CD8-positive, alpha-beta memory T cell (primary cell): ENCODE measurements at regions of chr17 and their contacts with region 1.

Region 1: DNA sequence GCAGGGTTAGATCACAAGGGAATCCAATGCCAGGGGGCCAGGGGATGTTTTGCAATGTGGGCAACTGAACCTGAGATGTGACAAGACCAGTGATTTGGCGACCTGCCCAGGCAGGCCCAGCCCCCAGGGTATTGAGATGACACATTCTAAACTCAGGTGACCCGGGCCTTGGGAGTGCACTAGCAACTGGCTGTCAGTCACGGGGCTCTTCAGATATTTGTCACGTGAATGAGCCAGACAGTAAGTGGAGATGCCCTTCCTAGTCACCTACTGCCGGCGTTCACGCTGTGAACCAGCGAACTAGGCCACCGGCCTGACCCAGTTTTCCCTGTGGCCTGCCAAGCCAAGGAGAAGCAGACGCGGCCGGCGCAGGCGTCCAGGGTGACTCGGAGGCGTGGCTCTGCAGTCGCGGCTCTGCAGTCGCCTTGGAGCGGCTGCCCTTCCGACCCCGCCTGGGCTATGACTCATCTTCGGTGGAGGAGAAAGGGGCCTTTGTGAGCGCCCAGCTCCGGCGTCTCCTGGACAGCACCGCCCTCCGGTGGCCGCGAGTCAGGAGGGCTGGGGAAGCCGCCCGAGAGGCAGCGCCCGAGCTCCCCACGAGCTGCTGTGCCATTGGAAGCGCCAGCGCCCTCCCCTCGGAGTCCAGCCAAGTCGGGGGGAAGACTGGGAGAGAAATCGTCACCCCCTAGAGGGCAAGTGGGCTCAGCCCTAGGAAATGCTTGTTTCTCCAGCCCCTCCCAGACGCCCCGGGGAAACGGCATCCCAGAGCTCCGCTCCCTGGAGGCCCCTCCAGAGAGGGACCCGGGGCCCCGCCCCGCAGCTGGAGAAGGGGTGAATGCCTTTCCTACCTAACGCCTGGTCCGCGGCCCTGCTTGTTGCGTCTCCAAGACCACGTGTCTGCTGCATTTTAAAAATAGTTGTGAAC is 38.8 kb downstream of the WSB1 start:
- DNase-seq: peak; percentile 70 to 94 (median 87)
- H3K4me3 ChIP-seq: peak overlapping the region; percentile 82
- H3K4me3 Mint-ChIP-seq: peak overlapping the region; percentile 81 to 92 (median 85)
- H3K27ac ChIP-seq: peak overlapping the region; percentile 73
- H3K27ac Mint-ChIP-seq: peak overlapping the region; percentile 80 to 94 (median 91)
- H3K4me1 ChIP-seq: no peaks in the 10 kb centered on the region
- H3K4me1 Mint-ChIP-seq: peaks cover 15 to 26% (median 19%) of the 10 kb centered on the region in 3 donors
- H3K27me3 ChIP-seq: no peaks in the 10 kb centered on the region
- H3K27me3 Mint-ChIP-seq: peaks cover 0 to 3% of the 10 kb centered on the region in 2 donors

Region 2: DNA sequence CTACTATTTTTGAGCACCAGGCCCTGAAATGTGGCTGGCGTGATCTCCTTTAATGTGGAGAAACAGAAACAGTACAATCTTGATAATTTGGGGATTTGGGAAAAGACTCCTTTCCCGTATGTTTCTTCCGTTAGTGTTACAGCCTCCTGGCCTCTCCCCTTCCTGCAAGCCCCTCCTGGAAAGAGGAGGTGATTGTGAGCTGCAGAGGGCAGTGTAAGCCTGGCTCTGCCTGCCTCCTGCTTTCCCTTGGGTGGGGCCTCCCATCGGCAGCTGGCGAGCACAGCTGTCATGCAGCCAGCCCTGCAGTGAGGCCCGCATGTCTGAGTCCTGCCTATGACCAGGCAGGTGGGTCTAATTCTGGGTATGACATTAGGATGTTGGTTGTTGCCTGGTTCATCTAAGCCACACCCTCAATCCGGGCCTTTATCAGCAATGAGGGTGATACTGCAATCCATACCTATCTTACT is 87.5 kb before region 1 on chr17:
- CTCF ChIA-PET with region 1: interaction called, 10 read pairs
- POLR2A ChIA-PET with region 1: no interaction called
- DNase-seq: peak; percentile 7 to 60 (median 15)
- H3K4me3 ChIP-seq: no peak overlapping the region
- H3K4me3 Mint-ChIP-seq: no peak overlapping the region
- H3K27ac ChIP-seq: no peak overlapping the region
- H3K27ac Mint-ChIP-seq: peak overlapping the region in 2 of 8 donors; percentile 43 to 68
- H3K4me1 ChIP-seq: no peaks in the 10 kb centered on the region
- H3K4me1 Mint-ChIP-seq: no peaks in the 10 kb centered on the region
- H3K27me3 ChIP-seq: no peaks in the 10 kb centered on the region
- H3K27me3 Mint-ChIP-seq: peaks cover 6 to 18% of the 10 kb centered on the region in 2 donors

Region 3: DNA sequence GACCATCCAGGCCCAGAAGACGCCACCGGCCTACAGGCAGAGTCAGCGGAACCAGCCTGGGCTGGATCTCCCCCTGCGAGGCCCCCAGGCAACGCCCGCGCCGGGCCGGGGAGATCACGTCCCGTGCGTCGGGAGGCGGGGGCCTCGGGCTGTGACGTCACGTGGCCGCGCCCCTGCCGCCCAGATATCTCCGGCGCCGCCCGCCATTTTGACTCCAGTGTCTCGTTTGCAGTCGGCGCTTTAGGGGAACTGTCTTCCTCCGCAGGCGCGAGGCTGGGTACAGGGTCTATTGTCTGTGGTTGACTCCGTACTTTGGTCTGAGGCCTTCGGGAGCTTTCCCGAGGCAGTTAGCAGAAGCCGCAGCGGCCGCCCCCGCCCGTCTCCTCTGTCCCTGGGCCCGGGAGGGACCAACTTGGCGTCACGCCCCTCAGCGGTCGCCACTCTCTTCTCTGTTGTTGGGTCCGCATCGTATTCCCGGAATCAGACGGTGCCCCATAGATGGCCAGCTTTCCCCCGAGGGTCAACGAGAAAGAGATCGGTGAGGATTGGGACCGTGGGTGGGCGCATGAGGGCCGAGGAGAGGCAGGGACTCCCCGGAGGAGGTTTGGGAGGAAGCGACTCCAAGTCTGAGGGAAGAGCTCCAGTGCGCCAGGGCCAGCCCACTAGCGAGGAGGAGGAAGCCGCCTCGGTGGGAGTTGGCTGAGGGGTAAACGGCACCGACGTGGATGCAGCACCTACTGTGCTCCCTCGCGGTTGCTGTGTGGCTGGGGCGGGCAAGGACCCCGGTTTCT is 38.7 kb before region 1 on chr17 and contains the start of gene WSB1:
- CTCF ChIA-PET with region 1: interaction called, 21 read pairs
- POLR2A ChIA-PET with region 1: interaction called, 19 read pairs
- DNase-seq: peak; percentile 87 to 94 (median 90)
- H3K4me3 ChIP-seq: peak within 1 kb of the TSS; percentile 100
- H3K4me3 Mint-ChIP-seq: peak within 1 kb of the TSS; percentile 90 to 98 (median 97)
- H3K27ac ChIP-seq: peak within 1 kb of the TSS; percentile 100
- H3K27ac Mint-ChIP-seq: peak within 1 kb of the TSS; percentile 95 to 100 (median 98)
- H3K4me1 ChIP-seq: peaks cover 40% of the 10 kb centered on the region
- H3K4me1 Mint-ChIP-seq: peaks cover 41 to 52% (median 52%) of the 10 kb centered on the region in 3 donors
- H3K27me3 ChIP-seq: no peaks in the 10 kb centered on the region
- H3K27me3 Mint-ChIP-seq: peaks cover 0 to 2% of the 10 kb centered on the region in 2 donors
- total RNA-seq, gene WSB1: 71.0 to 72.5 TPM